ENCODE measurements at regions of chr2 and their contacts with region 1.

Region 1: DNA sequence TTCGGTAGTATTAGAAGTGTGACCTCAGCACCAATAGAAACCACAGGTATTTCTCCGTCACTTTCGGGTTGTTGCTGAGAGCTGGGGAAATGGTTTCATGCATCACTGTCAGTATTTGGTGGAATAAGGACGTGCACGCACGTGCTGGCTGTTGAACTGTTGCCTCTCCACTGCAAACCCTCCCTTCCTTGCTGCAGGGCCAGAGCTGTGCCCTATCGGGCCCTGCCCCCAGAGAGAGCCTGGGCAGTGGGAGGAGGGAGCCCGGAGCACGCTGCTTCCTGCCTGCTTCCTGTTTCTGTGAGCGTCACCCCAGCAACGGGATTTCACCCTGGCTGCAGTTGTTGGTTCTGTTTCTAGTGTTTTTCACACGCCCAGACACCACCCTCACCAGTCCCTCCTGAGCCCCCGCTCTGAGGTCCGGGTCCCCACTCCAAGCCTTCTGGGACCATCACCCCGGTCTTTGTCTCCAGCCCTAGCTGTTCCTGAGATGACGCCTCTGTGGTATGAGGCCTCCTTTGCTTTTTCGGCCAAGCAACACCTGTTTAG is 47.4 kb downstream of the LRRFIP1 start:
- DNase-seq: peak; percentile 90
- ATAC-seq: peak; percentile 80
- H3K4me3 Mint-ChIP-seq: peak overlapping the region; percentile 75
- H3K27ac Mint-ChIP-seq: peak overlapping the region; percentile 87
- H3K4me1 Mint-ChIP-seq: peaks cover 47% of the 10 kb centered on the region
- H3K27me3 Mint-ChIP-seq: peaks cover 2% of the 10 kb centered on the region

Region 2: GRCh38 chr2:237581751-237582746 is 92.8 kb before region 1 on chr2:
- CTCF ChIA-PET with region 1: interaction called, 18 read pairs
- DNase-seq: peak; percentile 80
- ATAC-seq: peak; percentile 89
- H3K4me3 Mint-ChIP-seq: no peak overlapping the region
- H3K27ac Mint-ChIP-seq: peak overlapping the region; percentile 59
- H3K4me1 Mint-ChIP-seq: peaks cover 4% of the 10 kb centered on the region
- H3K27me3 Mint-ChIP-seq: peaks cover 5% of the 10 kb centered on the region

Region 3: GRCh38 chr2:237647176-237648007 is 27.4 kb before region 1 on chr2:
- CTCF ChIA-PET with region 1: no interaction called
- DNase-seq: peak; percentile 19
- ATAC-seq: no peak
- H3K4me3 Mint-ChIP-seq: no peak overlapping the region
- H3K27ac Mint-ChIP-seq: no peak overlapping the region
- H3K4me1 Mint-ChIP-seq: no peaks in the 10 kb centered on the region
- H3K27me3 Mint-ChIP-seq: peaks cover 22% of the 10 kb centered on the region

Region 4: GRCh38 chr2:237691908-237692600 is 17.2 kb after region 1 on chr2:
- CTCF ChIA-PET with region 1: interaction called, 210 read pairs
- DNase-seq: peak; percentile 96
- ATAC-seq: peak; percentile 71
- H3K4me3 Mint-ChIP-seq: peak overlapping the region; percentile 97
- H3K27ac Mint-ChIP-seq: peak overlapping the region; percentile 94
- H3K4me1 Mint-ChIP-seq: peaks cover 51% of the 10 kb centered on the region
- H3K27me3 Mint-ChIP-seq: no peaks in the 10 kb centered on the region

Region 5: GRCh38 chr2:237708065-237708398 is 33.2 kb after region 1 on chr2:
- CTCF ChIA-PET with region 1: interaction called, 60 read pairs
- DNase-seq: peak; percentile 40
- ATAC-seq: no peak
- H3K4me3 Mint-ChIP-seq: no peak overlapping the region
- H3K27ac Mint-ChIP-seq: no peak overlapping the region
- H3K4me1 Mint-ChIP-seq: peaks cover 47% of the 10 kb centered on the region
- H3K27me3 Mint-ChIP-seq: no peaks in the 10 kb centered on the region

Region 6: DNA sequence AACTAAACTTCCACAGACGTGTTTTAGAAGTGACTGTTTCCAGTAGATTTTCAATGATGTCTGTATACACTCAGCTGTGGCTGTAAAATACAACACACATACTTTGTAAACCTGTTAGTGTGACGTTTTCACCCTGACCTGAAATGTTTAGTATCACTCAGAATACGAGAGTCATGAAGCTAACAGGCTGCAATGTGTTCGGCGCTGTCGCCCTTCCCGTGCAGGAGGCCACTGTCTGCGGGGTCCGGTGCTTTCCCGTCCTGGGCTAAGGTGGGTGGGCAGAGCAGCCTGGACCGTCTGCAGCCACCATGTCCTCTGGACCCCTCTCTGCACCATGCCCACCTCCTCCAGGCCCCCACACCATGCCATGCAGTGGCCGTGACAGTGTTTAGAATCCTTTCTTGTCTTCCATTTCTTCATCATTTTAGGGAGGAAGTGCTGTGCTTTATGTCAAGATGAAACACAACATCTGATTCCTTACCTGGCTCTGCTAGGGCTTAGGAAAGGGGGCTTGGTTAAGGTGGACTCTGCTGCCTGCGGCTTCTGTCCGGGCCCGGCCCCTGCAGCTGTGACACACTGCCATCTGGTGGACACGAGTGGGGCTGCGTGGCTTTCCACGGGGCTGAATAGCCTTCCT is 69.9 kb after region 1 on chr2:
- CTCF ChIA-PET with region 1: interaction called, 134 read pairs
- DNase-seq: peak; percentile 78
- ATAC-seq: peak; percentile 86
- H3K4me3 Mint-ChIP-seq: no peak overlapping the region
- H3K27ac Mint-ChIP-seq: peak overlapping the region; percentile 41
- H3K4me1 Mint-ChIP-seq: peaks cover 19% of the 10 kb centered on the region
- H3K27me3 Mint-ChIP-seq: no peaks in the 10 kb centered on the region

Region 7: GRCh38 chr2:237774802-237775553 is 100.2 kb after region 1 on chr2:
- CTCF ChIA-PET with region 1: interaction called, 29 read pairs
- DNase-seq: peak; percentile 63
- ATAC-seq: peak; percentile 78
- H3K4me3 Mint-ChIP-seq: no peak overlapping the region
- H3K27ac Mint-ChIP-seq: no peak overlapping the region
- H3K4me1 Mint-ChIP-seq: no peaks in the 10 kb centered on the region
- H3K27me3 Mint-ChIP-seq: no peaks in the 10 kb centered on the region

Region 8: DNA sequence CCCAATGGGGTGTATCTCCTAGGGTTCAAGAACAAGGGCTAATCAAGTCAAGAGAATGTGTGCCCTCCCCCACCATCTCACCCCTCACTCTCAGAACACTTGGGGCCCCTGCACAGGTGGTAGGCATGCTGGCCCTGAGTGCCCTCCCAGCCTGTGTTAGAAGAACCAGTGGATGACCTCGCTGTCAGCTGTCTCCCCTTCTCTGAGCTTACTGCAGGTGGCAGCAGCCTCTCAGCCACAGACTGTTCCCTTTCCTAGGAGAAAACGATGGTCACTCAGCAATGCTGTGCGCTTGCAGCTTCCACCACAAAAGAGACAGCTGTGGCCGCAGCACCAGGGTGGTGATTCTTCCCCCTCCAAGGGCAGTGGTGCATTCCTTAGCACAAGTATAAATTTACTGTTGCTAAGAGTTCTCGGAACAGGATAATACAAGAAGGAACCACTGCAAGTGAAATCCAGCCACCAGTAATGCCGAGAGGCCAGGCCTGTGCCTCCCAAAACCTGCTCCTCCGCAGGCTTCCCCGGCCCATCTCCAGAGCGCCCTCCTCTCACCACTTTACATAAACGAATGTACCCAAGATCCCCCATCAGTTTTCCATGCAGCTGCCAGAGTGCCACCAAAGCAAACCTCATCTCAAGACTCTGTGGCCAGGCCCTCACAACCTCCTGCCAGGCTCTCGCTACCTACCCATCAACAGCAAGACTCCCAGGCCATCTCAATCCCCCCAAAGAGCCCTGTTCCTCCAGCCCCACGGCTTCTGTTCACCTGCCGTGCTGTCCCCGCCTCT is 183.7 kb after region 1 on chr2:
- CTCF ChIA-PET with region 1: no interaction called
- DNase-seq: peak; percentile 61
- ATAC-seq: peak; percentile 77
- H3K4me3 Mint-ChIP-seq: no peak overlapping the region
- H3K27ac Mint-ChIP-seq: no peak overlapping the region
- H3K4me1 Mint-ChIP-seq: peaks cover 7% of the 10 kb centered on the region
- H3K27me3 Mint-ChIP-seq: peaks cover 64% of the 10 kb centered on the region

Measured in activated CD8-positive, alpha-beta memory T cell treated with anti-CD3 and anti-CD28 coated beads, Interleukin-2, amount 10 ng/mL, durations not matched to agents 7 days and 5 days (primary cell).